ENCODE measurements at regions of chr6 and their contacts with region 1.

Region 1: DNA sequence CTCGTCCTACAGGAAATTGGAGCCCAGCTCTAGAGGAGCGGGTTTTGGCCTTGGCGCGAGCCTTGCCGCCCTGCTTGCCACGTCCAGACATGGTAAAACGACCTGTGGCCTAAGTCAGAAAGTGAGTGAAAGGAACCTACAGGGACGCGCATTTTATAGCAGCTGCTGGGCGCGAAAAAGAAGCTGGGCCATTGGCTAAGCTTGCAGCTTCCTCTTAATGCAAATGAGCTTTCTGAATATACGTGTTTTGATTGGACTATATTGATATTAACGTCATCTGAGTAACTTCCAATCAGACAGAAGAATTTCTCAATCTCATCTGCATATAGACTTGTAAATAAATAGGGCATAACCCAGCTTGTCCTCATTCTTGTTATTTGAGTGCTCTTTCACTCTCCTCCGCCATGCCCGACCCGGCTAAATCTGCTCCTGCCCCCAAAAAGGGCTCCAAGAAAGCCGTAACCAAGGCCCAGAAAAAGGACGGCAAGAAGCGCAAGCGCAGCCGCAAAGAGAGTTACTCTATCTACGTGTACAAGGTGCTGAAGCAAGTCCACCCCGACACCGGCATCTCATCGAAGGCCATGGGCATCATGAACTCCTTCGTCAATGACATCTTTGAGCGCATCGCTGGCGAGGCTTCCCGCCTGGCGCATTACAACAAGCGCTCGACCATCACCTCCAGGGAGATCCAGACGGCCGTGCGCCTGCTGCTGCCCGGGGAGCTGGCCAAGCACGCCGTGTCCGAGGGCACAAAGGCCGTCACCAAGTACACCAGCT is 18.9 kb downstream of the OR2B2 start:
- DNase-seq: peak; percentile 96
- H3K4me3 ChIP-seq: peak overlapping the region; percentile 94
- H3K27ac ChIP-seq: peak overlapping the region; percentile 100
- H3K4me1 ChIP-seq: peaks cover 36% of the 10 kb centered on the region
- CTCF ChIP-seq: no peak

Region 2: DNA sequence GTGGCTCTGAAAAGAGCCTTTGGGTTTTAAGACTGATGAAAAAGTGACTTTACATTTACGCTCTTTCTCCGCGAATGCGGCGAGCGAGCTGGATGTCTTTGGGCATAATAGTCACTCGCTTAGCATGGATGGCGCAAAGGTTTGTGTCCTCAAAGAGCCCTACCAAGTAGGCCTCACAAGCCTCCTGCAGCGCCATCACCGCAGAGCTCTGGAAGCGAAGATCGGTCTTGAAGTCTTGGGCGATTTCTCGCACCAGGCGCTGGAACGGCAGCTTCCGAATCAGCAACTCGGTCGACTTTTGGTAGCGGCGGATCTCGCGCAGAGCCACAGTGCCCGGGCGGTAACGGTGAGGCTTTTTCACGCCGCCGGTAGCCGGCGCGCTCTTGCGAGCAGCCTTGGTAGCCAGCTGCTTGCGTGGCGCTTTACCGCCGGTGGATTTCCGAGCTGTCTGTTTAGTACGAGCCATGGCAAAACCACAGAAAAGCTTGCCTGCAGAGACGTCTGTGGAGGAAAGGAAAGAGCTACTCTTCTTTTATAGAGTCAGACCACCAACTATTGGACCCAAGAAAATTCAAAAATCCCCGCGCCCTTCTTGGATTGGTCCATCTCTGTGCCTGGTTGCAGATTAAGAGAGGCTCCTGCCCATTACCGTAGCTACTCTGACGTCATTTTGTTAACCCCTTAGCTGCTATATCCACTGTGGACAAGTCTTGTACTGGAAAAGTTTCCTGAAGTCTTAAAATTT is 1861.5 kb before region 1 on chr6:
- CTCF ChIA-PET with region 1: no interaction called
- POLR2A ChIA-PET with region 1: interaction called, 49 read pairs
- intact Hi-C with region 1: loop called (anchors 5 kb)
- DNase-seq: peak; percentile 99
- H3K4me3 ChIP-seq: peak overlapping the region; percentile 78
- H3K27ac ChIP-seq: peak overlapping the region; percentile 99
- H3K4me1 ChIP-seq: peaks cover 74% of the 10 kb centered on the region
- CTCF ChIP-seq: 0 out of 2 replicates have a peak, but pooled peaks have one; percentile 33

Region 3: DNA sequence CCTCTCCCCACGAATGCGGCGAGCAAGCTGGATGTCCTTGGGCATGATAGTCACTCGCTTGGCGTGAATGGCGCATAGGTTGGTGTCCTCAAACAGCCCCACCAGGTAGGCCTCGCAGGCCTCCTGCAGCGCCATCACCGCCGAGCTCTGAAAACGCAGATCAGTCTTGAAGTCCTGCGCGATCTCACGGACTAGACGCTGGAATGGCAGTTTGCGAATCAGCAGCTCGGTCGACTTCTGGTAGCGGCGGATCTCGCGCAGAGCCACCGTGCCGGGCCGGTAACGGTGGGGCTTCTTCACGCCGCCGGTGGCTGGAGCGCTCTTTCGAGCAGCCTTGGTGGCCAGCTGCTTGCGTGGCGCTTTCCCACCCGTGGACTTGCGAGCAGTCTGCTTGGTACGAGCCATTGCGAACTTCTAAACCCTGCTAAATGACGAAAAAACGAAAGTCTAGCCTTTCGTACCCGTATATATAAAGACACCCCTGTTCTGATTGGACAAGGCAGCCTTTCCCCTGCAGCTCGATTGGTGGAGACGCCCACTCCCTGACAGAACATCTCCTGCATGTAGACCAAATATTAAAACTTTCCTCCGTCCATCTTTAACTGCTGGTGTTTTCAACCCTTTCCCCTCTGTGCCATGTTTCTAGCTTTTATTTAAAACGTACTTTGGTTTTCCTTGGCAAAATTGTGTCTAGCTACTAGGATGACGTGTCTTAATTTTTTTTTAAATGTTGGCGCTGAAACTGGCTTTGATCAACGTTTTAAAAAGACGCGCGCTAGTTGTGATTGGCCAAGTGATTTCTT is 1696.2 kb before region 1 on chr6:
- CTCF ChIA-PET with region 1: no interaction called
- POLR2A ChIA-PET with region 1: interaction called, 3 read pairs
- intact Hi-C with region 1: loop called (anchors 5 kb)
- DNase-seq: peak; percentile 96
- H3K4me3 ChIP-seq: peak overlapping the region; percentile 91
- H3K27ac ChIP-seq: peak overlapping the region; percentile 93
- H3K4me1 ChIP-seq: peaks cover 39% of the 10 kb centered on the region
- CTCF ChIP-seq: peak; percentile 31; the same call in 1 of the 2 replicates

Region 4: GRCh38 chr6:27146706-27147505 is 746.3 kb before region 1 on chr6:
- CTCF ChIA-PET with region 1: no interaction called
- POLR2A ChIA-PET with region 1: interaction called, 49 read pairs
- intact Hi-C with region 1: loop called (anchors 2 kb)
- DNase-seq: peak; percentile 98
- H3K4me3 ChIP-seq: peak overlapping the region; percentile 73
- H3K27ac ChIP-seq: peak overlapping the region; percentile 99
- H3K4me1 ChIP-seq: peaks cover 60% of the 10 kb centered on the region
- CTCF ChIP-seq: no peak

Region 5: GRCh38 chr6:27825025-27825793 is 68.0 kb before region 1 on chr6:
- CTCF ChIA-PET with region 1: no interaction called
- POLR2A ChIA-PET with region 1: interaction called, 202 read pairs
- intact Hi-C with region 1: no loop called
- DNase-seq: peak; percentile 72
- H3K4me3 ChIP-seq: peak overlapping the region; percentile 71
- H3K27ac ChIP-seq: peak overlapping the region; percentile 93
- H3K4me1 ChIP-seq: peaks cover 46% of the 10 kb centered on the region
- CTCF ChIP-seq: no peak

Region 6: GRCh38 chr6:27879837-27880236 is 13.4 kb before region 1 on chr6:
- CTCF ChIA-PET with region 1: interaction called, 3 read pairs
- POLR2A ChIA-PET with region 1: interaction called, 407 read pairs
- intact Hi-C with region 1: no loop called
- DNase-seq: no peak
- H3K4me3 ChIP-seq: no peak overlapping the region
- H3K27ac ChIP-seq: peak overlapping the region; percentile 22
- H3K4me1 ChIP-seq: peaks cover 5% of the 10 kb centered on the region
- CTCF ChIP-seq: no peak

Measured in OCI-LY7 (cell line).